ENCODE measurements at regions of chr16 and their contacts with region 1.

Region 1: GRCh38 chr16:68328151-68328859 is 17.5 kb downstream of the PRMT7 start:
- DNase-seq: peak; percentile 83
- H3K4me3 ChIP-seq: no peak overlapping the region
- H3K27ac ChIP-seq: no peak overlapping the region
- H3K4me1 ChIP-seq: peaks cover 34% of the 10 kb centered on the region
- H3K27me3 ChIP-seq: no peaks in the 10 kb centered on the region
- CTCF ChIP-seq: peak; percentile 87 to 97
- POLR2A ChIP-seq: no peak

Region 2: DNA sequence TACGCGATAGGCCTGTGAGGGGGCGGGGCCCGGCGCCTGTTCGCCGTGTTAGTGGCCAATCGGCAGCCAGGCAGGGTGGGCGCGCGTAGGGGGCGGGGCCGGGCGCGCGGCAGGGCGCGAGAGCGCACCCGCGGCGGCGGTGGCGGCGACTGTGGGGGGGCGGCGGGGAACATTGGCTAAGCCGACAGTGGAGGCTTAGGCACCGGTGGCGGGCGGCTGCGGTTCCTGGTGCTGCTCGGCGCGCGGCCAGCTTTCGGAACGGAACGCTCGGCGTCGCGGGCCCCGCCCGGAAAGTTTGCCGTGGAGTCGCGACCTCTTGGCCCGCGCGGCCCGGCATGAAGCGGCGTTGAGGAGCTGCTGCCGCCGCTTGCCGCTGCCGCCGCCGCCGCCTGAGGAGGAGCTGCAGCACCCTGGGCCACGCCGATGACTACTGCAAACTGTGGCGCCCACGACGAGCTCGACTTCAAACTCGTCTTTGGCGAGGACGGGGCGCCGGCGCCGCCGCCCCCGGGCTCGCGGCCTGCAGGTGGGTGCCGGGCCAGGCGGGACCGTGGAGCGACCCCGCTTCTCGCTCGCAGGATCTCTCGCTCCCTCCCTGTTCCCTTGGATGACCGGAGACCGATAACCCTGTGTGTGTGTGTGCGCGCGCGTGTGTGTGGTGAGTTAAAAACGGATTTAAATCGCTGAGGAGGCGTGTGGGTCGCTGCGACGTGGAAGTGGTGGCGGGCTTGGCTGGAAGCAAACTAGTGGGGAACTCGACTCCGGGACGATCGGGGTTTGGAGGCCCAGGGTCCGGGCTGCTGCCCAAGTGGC is 242.8 kb before region 1 on chr16 and contains the start of gene NFATC3:
- CTCF ChIA-PET with region 1: no interaction called
- POLR2A ChIA-PET with region 1: no interaction called
- dilution Hi-C with region 1: no loop called
- intact Hi-C with region 1: loop called (anchors 10 kb)
- DNase-seq: peak; percentile 95
- H3K4me3 ChIP-seq: peak within 1 kb of the TSS; percentile 67 to 97 (median 89)
- H3K27ac ChIP-seq: peak within 1 kb of the TSS; percentile 94
- H3K4me1 ChIP-seq: peaks cover 22% of the 10 kb centered on the region
- H3K27me3 ChIP-seq: no peaks in the 10 kb centered on the region
- CTCF ChIP-seq: no peak
- POLR2A ChIP-seq: no peak
- total RNA-seq, gene NFATC3: 30.5 and 33.1 TPM in 2 replicates

Region 3: GRCh38 chr16:68244903-68245853 is 83.1 kb before region 1 on chr16 and contains the start of gene PLA2G15:
- CTCF ChIA-PET with region 1: interaction called, 10 read pairs
- POLR2A ChIA-PET with region 1: no interaction called
- dilution Hi-C with region 1: no loop called
- intact Hi-C with region 1: loop called (anchors 1 kb)
- DNase-seq: peak; percentile 93
- H3K4me3 ChIP-seq: peak within 1 kb of the TSS; percentile 85 to 98 (median 90)
- H3K27ac ChIP-seq: no peak within 1 kb of the TSS
- H3K4me1 ChIP-seq: peaks cover 9% of the 10 kb centered on the region
- H3K27me3 ChIP-seq: no peaks in the 10 kb centered on the region
- CTCF ChIP-seq: no peak
- POLR2A ChIP-seq: peak; percentile 78
- total RNA-seq, gene PLA2G15: 24.0 and 24.3 TPM in 2 replicates

Region 4: GRCh38 chr16:68264128-68265077 is 63.9 kb before region 1 on chr16 and contains the start of gene SLC7A6:
- CTCF ChIA-PET with region 1: interaction called, 212 read pairs
- POLR2A ChIA-PET with region 1: interaction called, 3 read pairs
- dilution Hi-C with region 1: no loop called
- intact Hi-C with region 1: loop called (anchors 1 kb)
- DNase-seq: peak; percentile 78
- H3K4me3 ChIP-seq: peak within 1 kb of the TSS; percentile 44 to 69 (median 66)
- H3K27ac ChIP-seq: peak within 1 kb of the TSS; percentile 91
- H3K4me1 ChIP-seq: peaks cover 25% of the 10 kb centered on the region
- H3K27me3 ChIP-seq: no peaks in the 10 kb centered on the region
- CTCF ChIP-seq: peak; percentile 81 to 84
- POLR2A ChIP-seq: peak; percentile 68
- total RNA-seq, gene SLC7A6: 68.0 and 68.7 TPM in 2 replicates

Region 5: GRCh38 chr16:68310761-68311511 is 17.4 kb before region 1 on chr16 and contains the starts of genes PRMT7 and SLC7A6OS:
- CTCF ChIA-PET with region 1: interaction called, 17 read pairs
- POLR2A ChIA-PET with region 1: interaction called, 6 read pairs
- dilution Hi-C with region 1: no loop called
- intact Hi-C with region 1: loop called (anchors 1 kb)
- DNase-seq: peak; percentile 95
- H3K4me3 ChIP-seq: peak within 1 kb of the TSS; percentile 80 to 84 (median 83)
- H3K27ac ChIP-seq: peak within 1 kb of the TSS; percentile 58
- H3K4me1 ChIP-seq: peaks cover 20% of the 10 kb centered on the region
- H3K27me3 ChIP-seq: no peaks in the 10 kb centered on the region
- CTCF ChIP-seq: no peak
- POLR2A ChIP-seq: peak; percentile 96
- total RNA-seq, gene PRMT7: 33.8 and 43.4 TPM in 2 replicates
- total RNA-seq, gene SLC7A6OS: 22.0 and 22.9 TPM in 2 replicates